Activated CD8-positive, alpha-beta T cell treated with anti-CD3 and anti-CD28 coated beads for 36 hours (primary cell): ENCODE measurements at regions of chr4 and their contacts with region 1.

Region 1: DNA sequence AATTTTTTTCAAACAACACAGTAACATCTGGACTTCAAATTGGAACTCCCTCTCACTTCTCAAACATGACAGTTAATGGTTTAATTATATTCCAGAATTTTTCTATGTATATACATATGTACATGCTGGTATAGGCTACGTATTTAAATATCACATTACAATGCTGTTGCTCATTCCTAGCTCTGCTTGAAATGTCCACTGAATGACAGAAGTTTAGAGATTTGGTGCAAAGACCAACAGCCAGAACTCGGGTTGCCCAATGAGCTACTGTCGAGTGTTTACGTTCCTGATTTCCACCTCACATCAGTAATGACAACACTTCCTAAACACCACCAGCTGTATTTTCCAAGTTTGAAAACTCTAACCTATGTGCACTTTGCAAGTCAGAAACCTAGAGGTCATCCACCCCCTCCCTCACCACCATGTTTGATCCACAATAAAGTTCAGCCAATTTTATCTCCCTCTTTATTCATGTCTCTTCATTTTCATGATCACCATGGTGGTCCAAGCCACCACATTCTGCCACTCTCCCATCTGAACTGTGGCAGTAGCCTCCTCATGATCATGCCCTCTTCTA is 49.3 kb upstream of the RPL34 start:
- DNase-seq: no peak
- ATAC-seq: no peak
- H3K4me3 Mint-ChIP-seq: no peak overlapping the region
- H3K27ac Mint-ChIP-seq: no peak overlapping the region
- H3K4me1 Mint-ChIP-seq: peaks cover 33% of the 10 kb centered on the region
- H3K27me3 Mint-ChIP-seq: peaks cover 2% of the 10 kb centered on the region
- CTCF ChIP-seq: no peak

Region 2: GRCh38 chr4:108008721-108009120 is 562.4 kb before region 1 on chr4:
- CTCF ChIA-PET with region 1: interaction called, 15 read pairs
- POLR2A ChIA-PET with region 1: no interaction called
- intact Hi-C with region 1: no loop called
- DNase-seq: no peak
- ATAC-seq: no peak
- H3K4me3 Mint-ChIP-seq: no peak overlapping the region
- H3K27ac Mint-ChIP-seq: no peak overlapping the region
- H3K4me1 Mint-ChIP-seq: peaks cover 28% of the 10 kb centered on the region
- H3K27me3 Mint-ChIP-seq: no peaks in the 10 kb centered on the region
- CTCF ChIP-seq: no peak

Region 3: DNA sequence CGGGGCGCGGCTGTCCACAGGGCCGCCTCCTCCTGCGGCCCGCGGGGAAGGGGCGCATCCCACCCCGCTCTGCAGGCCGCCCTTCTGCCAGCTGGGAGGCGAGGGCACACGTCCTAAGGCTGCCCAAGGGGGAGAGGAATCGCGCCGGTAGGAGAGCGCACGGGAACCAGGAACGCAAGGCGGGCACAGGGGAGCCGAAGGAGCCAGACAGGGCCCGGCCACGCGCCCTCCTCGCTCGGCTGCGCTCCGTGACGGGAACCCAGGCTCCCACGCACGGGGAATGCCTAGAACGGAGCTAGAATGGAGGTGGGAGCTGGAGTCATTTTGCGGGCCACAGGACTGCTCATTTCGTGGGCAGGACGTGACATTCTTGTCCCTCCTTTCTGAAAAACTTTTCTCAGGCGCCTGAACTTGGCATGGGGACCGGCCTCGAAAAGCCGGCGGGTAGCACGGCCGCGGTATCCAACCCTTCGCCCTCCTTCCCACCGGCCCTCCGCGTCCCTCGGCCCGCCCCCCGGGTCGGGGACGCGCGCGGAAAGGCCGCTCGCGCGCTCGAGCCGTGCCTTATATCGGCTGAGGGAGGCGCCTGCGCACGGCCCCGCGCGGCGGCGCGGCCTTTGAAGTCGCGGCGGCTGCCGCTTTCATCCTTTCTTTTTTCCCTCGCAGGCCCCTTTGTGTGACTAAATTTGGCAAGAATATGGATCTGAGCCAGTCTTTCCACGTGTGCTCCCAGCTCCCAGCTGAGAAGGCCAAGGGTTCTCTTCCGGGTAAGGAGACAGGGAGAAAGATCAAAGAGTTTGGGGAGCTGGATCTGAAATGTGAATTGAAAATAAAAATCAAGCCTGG is 398.1 kb before region 1 on chr4:
- CTCF ChIA-PET with region 1: interaction called, 4 read pairs
- POLR2A ChIA-PET with region 1: no interaction called
- intact Hi-C with region 1: loop called (anchors 5 kb)
- DNase-seq: peak; percentile 76
- ATAC-seq: peak; percentile 46
- H3K4me3 Mint-ChIP-seq: peak overlapping the region; percentile 96
- H3K27ac Mint-ChIP-seq: peak overlapping the region; percentile 95
- H3K4me1 Mint-ChIP-seq: peaks cover 38% of the 10 kb centered on the region
- H3K27me3 Mint-ChIP-seq: peaks cover 7% of the 10 kb centered on the region
- CTCF ChIP-seq: no peak

Region 4: GRCh38 chr4:108512615-108513505 is 58.2 kb before region 1 on chr4:
- CTCF ChIA-PET with region 1: interaction called, 12 read pairs
- POLR2A ChIA-PET with region 1: no interaction called
- intact Hi-C with region 1: no loop called
- DNase-seq: peak; percentile 65
- ATAC-seq: peak; percentile 93
- H3K4me3 Mint-ChIP-seq: peak overlapping the region; percentile 62
- H3K27ac Mint-ChIP-seq: no peak overlapping the region
- H3K4me1 Mint-ChIP-seq: peaks cover 17% of the 10 kb centered on the region
- H3K27me3 Mint-ChIP-seq: no peaks in the 10 kb centered on the region
- CTCF ChIP-seq: peak; percentile 51

Region 5: GRCh38 chr4:108535757-108536156 is 35.3 kb before region 1 on chr4:
- CTCF ChIA-PET with region 1: interaction called, 14 read pairs
- POLR2A ChIA-PET with region 1: no interaction called
- intact Hi-C with region 1: no loop called
- DNase-seq: no peak
- ATAC-seq: peak; percentile 28
- H3K4me3 Mint-ChIP-seq: no peak overlapping the region
- H3K27ac Mint-ChIP-seq: peak overlapping the region; percentile 49
- H3K4me1 Mint-ChIP-seq: peaks cover 53% of the 10 kb centered on the region
- H3K27me3 Mint-ChIP-seq: no peaks in the 10 kb centered on the region
- CTCF ChIP-seq: no peak

Region 6: DNA sequence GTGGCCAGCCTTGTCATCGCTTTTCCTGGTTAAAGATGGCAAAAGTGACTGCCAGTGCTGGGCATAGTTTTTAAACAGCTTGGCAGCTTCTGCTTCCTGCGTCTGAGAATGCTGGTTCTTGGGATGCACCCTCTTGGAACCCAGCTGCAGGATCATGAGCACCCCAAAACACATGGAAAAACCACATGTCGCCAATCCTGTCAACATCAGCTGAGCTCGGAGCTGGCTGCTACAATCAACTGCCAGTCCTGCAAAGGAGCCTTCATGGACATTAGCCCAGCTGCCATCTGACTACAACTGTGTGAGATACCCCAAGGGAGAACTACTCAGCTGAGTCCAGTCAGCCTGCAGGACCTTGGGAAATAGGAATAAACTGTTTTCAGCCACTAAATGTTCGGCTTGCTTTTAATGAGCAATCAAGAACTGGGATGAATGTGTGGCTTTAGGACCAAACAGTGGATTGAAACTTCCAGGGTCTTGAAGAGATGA is 110.3 kb after region 1 on chr4:
- CTCF ChIA-PET with region 1: no interaction called
- POLR2A ChIA-PET with region 1: no interaction called
- intact Hi-C with region 1: no loop called
- DNase-seq: no peak
- ATAC-seq: no peak
- H3K4me3 Mint-ChIP-seq: no peak overlapping the region
- H3K27ac Mint-ChIP-seq: no peak overlapping the region
- H3K4me1 Mint-ChIP-seq: no peaks in the 10 kb centered on the region
- H3K27me3 Mint-ChIP-seq: no peaks in the 10 kb centered on the region
- CTCF ChIP-seq: no peak